ENCODE measurements at regions of chr13 and their contacts with region 1.

Region 1: GRCh38 chr13:43510956-43511901 is 275.5 kb downstream of the ENOX1 start:
- DNase-seq: no peak
- H3K4me3 ChIP-seq: no peak overlapping the region
- H3K27ac ChIP-seq: peak overlapping the region; percentile 18 to 21
- H3K4me1 ChIP-seq: no peaks in the 10 kb centered on the region
- H3K27me3 ChIP-seq: no peaks in the 10 kb centered on the region
- CTCF ChIP-seq: no peak
- POLR2A ChIP-seq: no peak

Region 2: GRCh38 chr13:43339805-43340550 is 171.3 kb before region 1 on chr13:
- intact Hi-C with region 1: loop called (anchors 5 kb)
- DNase-seq: no peak
- H3K4me3 ChIP-seq: no peak overlapping the region
- H3K27ac ChIP-seq: no peak overlapping the region
- H3K4me1 ChIP-seq: no peaks in the 10 kb centered on the region
- H3K27me3 ChIP-seq: no peaks in the 10 kb centered on the region
- CTCF ChIP-seq: no peak
- POLR2A ChIP-seq: no peak

Region 3: DNA sequence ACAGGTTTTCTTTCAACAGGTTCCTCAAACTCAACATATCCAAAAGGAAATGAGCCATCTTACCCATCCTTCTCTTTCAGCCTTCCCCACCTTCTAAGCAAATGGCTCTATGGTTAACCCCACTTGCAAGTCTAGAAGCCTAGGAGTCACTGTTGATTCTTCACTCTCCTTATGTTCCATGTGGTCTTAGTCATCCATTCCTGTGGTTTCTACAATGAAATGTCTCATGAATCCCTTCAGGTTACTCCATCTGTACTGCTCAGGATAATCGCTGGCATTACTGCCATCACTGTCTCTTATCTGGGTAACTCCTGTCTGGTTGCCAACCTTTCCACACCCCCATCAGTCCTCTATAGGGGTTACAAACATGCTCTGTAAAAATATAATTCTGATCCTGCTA is 105.8 kb before region 1 on chr13:
- intact Hi-C with region 1: no loop called
- DNase-seq: no peak
- H3K4me3 ChIP-seq: no peak overlapping the region
- H3K27ac ChIP-seq: no peak overlapping the region
- H3K4me1 ChIP-seq: peaks cover 2% of the 10 kb centered on the region
- H3K27me3 ChIP-seq: no peaks in the 10 kb centered on the region
- CTCF ChIP-seq: no peak
- POLR2A ChIP-seq: no peak

Region 4: DNA sequence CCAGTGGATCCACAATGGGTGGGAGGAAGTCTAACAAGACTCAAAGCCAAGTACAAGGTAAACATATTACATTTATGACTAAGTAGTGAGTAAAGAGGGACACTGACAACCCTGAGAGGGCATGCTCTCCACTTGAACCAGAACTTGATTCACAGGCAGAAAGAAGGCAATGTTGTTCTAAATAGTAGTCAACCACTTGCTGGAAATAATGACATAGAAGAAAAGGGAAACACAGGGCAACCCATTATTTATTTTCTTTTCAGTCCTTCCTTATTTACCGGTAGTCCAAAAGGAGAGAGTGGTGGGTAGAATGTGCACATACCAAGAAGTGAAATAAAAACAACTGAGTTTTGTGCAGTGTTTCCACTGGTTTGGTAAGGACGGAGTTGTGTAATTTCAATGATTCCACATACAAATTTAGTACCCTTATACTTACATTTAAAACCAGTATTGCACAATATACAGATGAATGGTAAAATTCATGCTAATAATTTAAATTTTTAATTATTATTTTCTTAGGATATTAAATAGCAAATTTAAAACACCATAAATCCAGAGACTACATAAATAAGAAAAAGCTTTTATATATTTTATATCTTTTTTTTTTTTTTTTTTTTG is 209.7 kb after region 1 on chr13:
- intact Hi-C with region 1: no loop called
- DNase-seq: no peak
- H3K4me3 ChIP-seq: no peak overlapping the region
- H3K27ac ChIP-seq: no peak overlapping the region
- H3K4me1 ChIP-seq: no peaks in the 10 kb centered on the region
- H3K27me3 ChIP-seq: no peaks in the 10 kb centered on the region
- CTCF ChIP-seq: no peak
- POLR2A ChIP-seq: no peak

Measured in prostate gland (tissue), 2 donors.